Gastrocnemius medialis (tissue), 4 donors: ENCODE measurements at regions of chr14 and their contacts with region 1.

Region 1: GRCh38 chr14:60656686-60657455 is 7.6 kb upstream of the SIX1 start:
- DNase-seq: peak; percentile 67 to 88
- ATAC-seq: peak; percentile 58 to 59
- H3K4me3 ChIP-seq: peak overlapping the region; percentile 73 to 90 (median 84)
- H3K27ac ChIP-seq: peak overlapping the region; percentile 93 to 98 (median 95)
- H3K4me1 ChIP-seq: peaks cover 26 to 34% of the 10 kb centered on the region in 2 donors
- H3K27me3 ChIP-seq: no peaks in the 10 kb centered on the region
- CTCF ChIP-seq: peak in 4 of 5 experiments; percentile 20 to 70 (median 49)
- POLR2A ChIP-seq: peak; percentile 33 to 50

Region 2: GRCh38 chr14:60482743-60483142 is 174.1 kb before region 1 on chr14:
- in situ Hi-C with region 1: no loop called
- intact Hi-C with region 1: no loop called
- DNase-seq: no peak
- ATAC-seq: no peak
- H3K4me3 ChIP-seq: no peak overlapping the region
- H3K27ac ChIP-seq: no peak overlapping the region
- H3K4me1 ChIP-seq: peaks cover 7 to 10% of the 10 kb centered on the region in 2 donors
- H3K27me3 ChIP-seq: peaks cover 0 to 2% (median 0%) of the 10 kb centered on the region in 3 donors
- CTCF ChIP-seq: no peak
- POLR2A ChIP-seq: no peak

Region 3: GRCh38 chr14:60805841-60806569 is 149.1 kb after region 1 on chr14:
- in situ Hi-C with region 1: no loop called
- intact Hi-C with region 1: loop called (anchors 5 kb)
- DNase-seq: no peak
- ATAC-seq: no peak
- H3K4me3 ChIP-seq: no peak overlapping the region
- H3K27ac ChIP-seq: peak overlapping the region; percentile 74 to 82 (median 80)
- H3K4me1 ChIP-seq: peaks cover 8 to 28% of the 10 kb centered on the region in 2 donors
- H3K27me3 ChIP-seq: no peaks in the 10 kb centered on the region
- CTCF ChIP-seq: no peak
- POLR2A ChIP-seq: no peak